Activated CD4-positive, alpha-beta memory T cell treated with anti-CD3 and anti-CD28 coated beads for 36 hours (primary cell): ENCODE measurements at regions of chr18 and their contacts with region 1.

Region 1: DNA sequence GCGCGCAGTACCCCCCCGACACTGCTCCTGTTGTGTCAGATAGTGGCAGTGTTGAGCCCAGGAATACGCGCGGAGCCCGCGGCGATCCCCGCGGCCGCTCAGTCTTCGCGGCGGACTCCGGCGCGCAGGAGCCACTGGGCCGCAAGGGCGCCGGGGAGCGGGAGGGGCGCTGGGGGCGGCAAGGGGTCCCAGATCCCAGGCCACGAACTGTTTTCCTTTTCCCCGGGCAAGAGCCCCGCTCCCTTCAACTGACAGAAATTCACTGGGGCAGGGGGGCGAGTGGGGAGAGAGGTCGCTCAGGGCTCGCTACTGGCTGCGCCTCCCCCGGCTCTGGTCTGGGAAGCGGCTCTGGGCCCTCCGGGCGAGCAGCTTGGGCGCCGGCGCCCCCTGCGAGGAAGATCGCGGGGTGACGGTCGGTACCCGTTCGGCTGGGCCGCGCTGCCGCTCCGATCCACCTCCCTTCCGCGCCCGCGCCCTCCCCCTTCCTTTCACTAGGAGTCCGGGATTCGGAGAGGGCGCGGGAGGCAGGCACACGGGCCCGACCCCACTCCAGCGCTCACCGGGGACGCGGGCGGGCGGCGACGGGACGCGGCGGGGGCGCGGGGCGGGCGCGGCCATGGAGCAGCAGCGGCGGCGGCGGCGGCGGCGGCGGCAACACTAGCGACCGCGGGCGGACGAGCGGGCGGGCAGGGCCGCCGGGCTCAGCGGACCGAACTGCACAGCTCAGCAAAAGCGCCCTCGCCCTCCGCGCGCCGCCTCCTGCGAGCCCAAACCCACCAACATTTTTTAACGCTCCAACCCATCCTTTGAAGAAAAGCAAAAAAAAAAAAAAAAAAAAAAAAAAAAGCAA is 1.4 kb upstream of the SETBP1 start:
- DNase-seq: peak; percentile 84
- H3K4me3 Mint-ChIP-seq: peak overlapping the region; percentile 37
- H3K27ac Mint-ChIP-seq: peak overlapping the region; percentile 18
- H3K4me1 Mint-ChIP-seq: peaks cover 9% of the 10 kb centered on the region
- H3K27me3 Mint-ChIP-seq: peaks cover 26% of the 10 kb centered on the region

Region 2: GRCh38 chr18:44651453-44651852 is 27.8 kb before region 1 on chr18:
- CTCF ChIA-PET with region 1: no interaction called
- POLR2A ChIA-PET with region 1: no interaction called
- intact Hi-C with region 1: no loop called
- DNase-seq: no peak
- H3K4me3 Mint-ChIP-seq: no peak overlapping the region
- H3K27ac Mint-ChIP-seq: no peak overlapping the region
- H3K4me1 Mint-ChIP-seq: no peaks in the 10 kb centered on the region
- H3K27me3 Mint-ChIP-seq: peaks cover 9% of the 10 kb centered on the region

Region 3: DNA sequence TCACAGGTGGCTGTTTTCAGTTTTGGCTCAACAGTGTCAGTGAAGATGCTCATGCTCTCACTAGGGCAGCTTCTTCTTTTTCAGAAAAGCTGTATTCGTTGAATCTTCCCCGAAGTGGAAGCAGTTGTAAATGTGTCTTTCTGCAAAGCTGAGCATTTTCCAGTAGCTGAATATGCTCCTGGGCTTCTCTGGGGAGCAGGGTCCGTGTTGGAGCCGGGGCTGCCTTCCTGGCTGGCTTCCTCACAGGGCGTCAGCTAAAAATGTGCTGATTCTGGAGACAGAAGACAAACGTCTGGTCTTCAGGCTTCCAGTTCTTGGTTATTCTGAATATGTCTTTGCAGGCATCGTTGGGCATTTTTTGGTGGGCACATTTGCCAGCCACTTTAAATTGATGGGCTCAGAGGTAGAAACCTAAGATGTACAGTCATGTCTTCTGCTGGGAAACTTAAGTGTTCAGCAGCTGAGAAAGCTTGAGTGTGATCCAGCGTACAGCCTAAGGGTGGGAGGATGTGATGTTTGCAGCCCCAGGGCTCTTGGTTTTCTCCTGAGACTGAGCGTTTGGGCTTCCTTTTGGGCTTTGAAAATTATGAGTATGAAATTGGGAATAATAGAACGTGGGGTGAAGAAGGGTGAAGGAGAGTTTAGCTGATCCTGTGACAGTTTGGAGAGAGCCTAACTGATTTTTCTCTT is 20.4 kb after region 1 on chr18:
- CTCF ChIA-PET with region 1: interaction called, 4 read pairs
- POLR2A ChIA-PET with region 1: interaction called, 3 read pairs
- intact Hi-C with region 1: loop called (anchors 2 kb)
- DNase-seq: no peak
- H3K4me3 Mint-ChIP-seq: no peak overlapping the region
- H3K27ac Mint-ChIP-seq: no peak overlapping the region
- H3K4me1 Mint-ChIP-seq: peaks cover 15% of the 10 kb centered on the region
- H3K27me3 Mint-ChIP-seq: peaks cover 7% of the 10 kb centered on the region

Region 4: GRCh38 chr18:44725300-44726096 is 46.2 kb after region 1 on chr18:
- CTCF ChIA-PET with region 1: interaction called, 7 read pairs
- POLR2A ChIA-PET with region 1: interaction called, 17 read pairs
- intact Hi-C with region 1: loop called (anchors 1 kb)
- DNase-seq: peak; percentile 83
- H3K4me3 Mint-ChIP-seq: peak overlapping the region; percentile 27
- H3K27ac Mint-ChIP-seq: peak overlapping the region; percentile 81
- H3K4me1 Mint-ChIP-seq: peaks cover 78% of the 10 kb centered on the region
- H3K27me3 Mint-ChIP-seq: no peaks in the 10 kb centered on the region

Region 5: DNA sequence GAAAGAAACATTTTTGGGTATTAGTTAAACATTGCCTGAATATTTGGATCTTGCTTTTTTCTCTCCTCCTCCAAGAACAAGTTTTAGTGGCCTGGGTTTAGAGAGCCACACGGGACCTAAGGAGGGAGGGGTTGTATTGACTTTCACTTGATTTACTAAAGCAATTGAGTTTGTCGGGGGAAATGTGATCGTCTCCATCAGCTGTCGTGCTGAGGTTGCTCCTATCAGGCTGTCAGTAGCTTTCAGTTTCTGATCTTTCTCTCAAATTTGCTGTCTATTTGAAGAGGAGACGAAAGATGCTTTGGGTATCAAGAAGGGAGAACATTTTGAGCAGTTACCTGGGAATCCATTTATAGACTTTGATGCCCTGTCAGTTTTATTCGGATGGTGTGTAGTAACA is 107.4 kb after region 1 on chr18:
- CTCF ChIA-PET with region 1: no interaction called
- POLR2A ChIA-PET with region 1: no interaction called
- intact Hi-C with region 1: no loop called
- DNase-seq: no peak
- H3K4me3 Mint-ChIP-seq: peak overlapping the region; percentile 36
- H3K27ac Mint-ChIP-seq: no peak overlapping the region
- H3K4me1 Mint-ChIP-seq: peaks cover 9% of the 10 kb centered on the region
- H3K27me3 Mint-ChIP-seq: peaks cover 18% of the 10 kb centered on the region

Region 6: DNA sequence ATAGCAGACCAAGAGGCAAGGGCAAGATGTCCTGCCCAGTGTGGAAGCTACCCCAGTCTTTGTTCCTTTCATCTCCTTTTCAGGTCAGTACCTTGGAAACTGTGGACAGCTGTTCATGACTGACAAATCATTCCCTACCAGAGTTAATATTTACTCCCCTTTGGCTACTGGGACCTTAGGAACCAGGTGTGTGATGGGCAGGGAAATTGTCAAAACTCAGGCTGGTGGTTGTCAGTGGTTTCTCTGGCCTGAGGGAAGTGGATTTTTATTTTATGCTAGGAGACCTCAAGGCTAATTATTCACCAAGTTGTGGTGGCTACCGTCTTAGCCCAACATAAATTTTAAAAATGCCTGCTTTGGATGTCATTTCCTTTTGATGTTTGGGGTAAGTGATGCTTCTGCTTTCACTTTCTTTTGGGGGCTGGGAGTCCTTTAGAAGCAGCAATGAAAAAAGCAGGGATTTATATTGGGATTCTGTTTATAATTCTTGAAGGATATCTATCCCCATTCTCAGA is 120.7 kb after region 1 on chr18:
- CTCF ChIA-PET with region 1: interaction called, 4 read pairs
- POLR2A ChIA-PET with region 1: no interaction called
- intact Hi-C with region 1: loop called (anchors 5 kb)
- DNase-seq: no peak
- H3K4me3 Mint-ChIP-seq: no peak overlapping the region
- H3K27ac Mint-ChIP-seq: no peak overlapping the region
- H3K4me1 Mint-ChIP-seq: peaks cover 43% of the 10 kb centered on the region
- H3K27me3 Mint-ChIP-seq: peaks cover 3% of the 10 kb centered on the region

Region 7: DNA sequence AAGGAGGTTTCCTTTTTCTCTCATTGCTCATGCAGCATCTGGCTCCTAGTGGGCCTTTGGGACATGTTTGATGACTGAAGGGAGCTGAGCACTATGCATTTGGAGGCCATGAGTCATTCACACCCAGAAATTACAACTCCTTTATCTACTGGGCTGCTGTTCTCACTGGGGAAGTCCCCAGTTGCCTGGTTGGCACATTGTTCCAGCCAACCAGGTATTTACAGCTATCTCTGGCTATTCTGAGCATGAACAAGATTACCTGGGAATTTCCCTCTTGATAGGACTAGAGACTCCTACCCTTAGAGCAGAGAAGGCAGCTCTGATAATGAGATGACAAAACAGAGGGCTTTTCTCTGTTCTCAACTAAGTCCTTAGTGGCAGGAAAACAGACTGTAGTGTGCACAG is 207.9 kb after region 1 on chr18:
- CTCF ChIA-PET with region 1: interaction called, 11 read pairs
- POLR2A ChIA-PET with region 1: interaction called, 16 read pairs
- intact Hi-C with region 1: loop called (anchors 1 kb)
- DNase-seq: peak; percentile 74
- H3K4me3 Mint-ChIP-seq: no peak overlapping the region
- H3K27ac Mint-ChIP-seq: peak overlapping the region; percentile 88
- H3K4me1 Mint-ChIP-seq: peaks cover 25% of the 10 kb centered on the region
- H3K27me3 Mint-ChIP-seq: peaks cover 3% of the 10 kb centered on the region

Region 8: DNA sequence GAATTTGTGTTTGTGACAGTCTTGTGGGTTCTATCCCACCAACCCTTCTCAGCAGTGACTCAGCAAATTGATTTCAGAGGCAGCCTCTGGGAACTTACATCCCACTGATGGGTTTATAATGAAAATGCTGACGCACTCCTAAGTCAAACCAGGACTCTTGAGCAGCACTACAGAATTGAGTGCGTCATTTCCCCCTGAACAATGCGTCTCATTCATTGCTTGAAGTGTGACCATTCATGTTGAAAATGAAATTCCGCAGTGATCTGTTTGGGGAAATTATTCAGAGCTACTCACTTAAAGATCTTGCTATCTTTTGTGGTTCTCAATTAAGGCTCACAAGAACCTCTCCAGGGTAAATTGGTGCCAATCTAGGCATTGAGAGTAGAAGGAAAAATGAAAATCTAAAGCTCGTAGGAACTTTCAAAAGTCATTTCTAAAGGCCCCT is 518.3 kb after region 1 on chr18:
- CTCF ChIA-PET with region 1: no interaction called
- POLR2A ChIA-PET with region 1: no interaction called
- intact Hi-C with region 1: loop called (anchors 5 kb)
- DNase-seq: peak; percentile 60
- H3K4me3 Mint-ChIP-seq: no peak overlapping the region
- H3K27ac Mint-ChIP-seq: no peak overlapping the region
- H3K4me1 Mint-ChIP-seq: peaks cover 9% of the 10 kb centered on the region
- H3K27me3 Mint-ChIP-seq: peaks cover 21% of the 10 kb centered on the region

Region 9: GRCh38 chr18:45384137-45384961 is 705.1 kb after region 1 on chr18:
- CTCF ChIA-PET with region 1: no interaction called
- POLR2A ChIA-PET with region 1: no interaction called
- intact Hi-C with region 1: loop called (anchors 10 kb)
- DNase-seq: peak; percentile 44
- H3K4me3 Mint-ChIP-seq: no peak overlapping the region
- H3K27ac Mint-ChIP-seq: no peak overlapping the region
- H3K4me1 Mint-ChIP-seq: no peaks in the 10 kb centered on the region
- H3K27me3 Mint-ChIP-seq: peaks cover 19% of the 10 kb centered on the region